ENCODE measurements at regions of chr14 and their contacts with region 1.

Region 1: DNA sequence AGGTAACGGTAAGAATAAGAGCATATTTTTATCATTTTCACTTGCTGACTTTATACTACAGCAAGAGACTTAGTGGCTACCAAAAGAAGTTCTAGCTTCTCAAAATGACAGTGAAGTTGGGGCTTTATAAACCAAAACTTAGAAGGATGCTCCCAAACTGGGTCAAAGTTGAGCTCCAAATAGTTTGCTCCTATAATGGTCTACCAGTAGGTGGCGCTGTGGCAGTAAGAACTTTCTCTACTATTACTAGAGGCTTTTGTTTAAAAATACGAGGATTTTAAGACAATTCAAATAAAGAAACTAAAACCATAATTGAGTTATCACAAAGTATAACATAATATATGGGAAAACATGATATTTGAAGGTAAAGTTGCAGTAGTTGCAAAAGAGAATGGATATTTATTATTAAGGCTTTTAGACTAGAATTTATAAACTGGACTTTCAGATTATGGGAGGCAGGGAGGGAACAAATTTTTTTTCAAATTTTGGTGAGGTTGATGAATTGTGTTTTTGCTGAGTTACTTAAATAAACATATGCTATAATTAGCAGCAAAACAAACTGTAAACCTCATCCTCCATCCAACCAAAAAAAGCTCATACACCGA is 75.0 kb downstream of the TGFB3 start:
- DNase-seq: peak; percentile 87
- H3K4me3 Mint-ChIP-seq: no peak overlapping the region
- H3K27ac Mint-ChIP-seq: no peak overlapping the region
- H3K4me1 Mint-ChIP-seq: no peaks in the 10 kb centered on the region
- H3K27me3 Mint-ChIP-seq: no peaks in the 10 kb centered on the region

Region 2: DNA sequence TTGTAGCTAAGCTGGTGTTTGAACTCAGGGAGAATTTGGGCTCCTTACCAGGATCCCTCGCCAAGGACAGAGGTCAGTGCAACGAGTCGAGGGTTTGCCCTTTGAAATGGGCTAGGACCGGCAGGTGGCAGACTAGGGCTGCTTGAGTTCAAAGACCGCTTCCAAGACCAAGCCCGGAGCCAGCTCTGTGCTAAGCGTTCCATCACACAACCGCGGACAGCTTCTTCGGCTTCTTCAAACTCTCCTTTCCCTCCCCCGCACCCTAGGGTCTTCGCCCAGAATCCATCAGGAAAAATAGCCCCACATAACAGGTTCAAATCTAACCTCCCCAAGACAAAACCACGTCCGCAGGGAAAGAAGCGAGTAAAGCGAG is 329.1 kb before region 1 on chr14:
- CTCF ChIA-PET with region 1: interaction called, 3 read pairs
- intact Hi-C with region 1: loop called (anchors 10 kb)
- DNase-seq: peak; percentile 88
- H3K4me3 Mint-ChIP-seq: peak overlapping the region; percentile 82
- H3K27ac Mint-ChIP-seq: peak overlapping the region; percentile 78
- H3K4me1 Mint-ChIP-seq: peaks cover 22% of the 10 kb centered on the region
- H3K27me3 Mint-ChIP-seq: no peaks in the 10 kb centered on the region

Region 3: GRCh38 chr14:75709207-75709812 is 197.5 kb before region 1 on chr14:
- CTCF ChIA-PET with region 1: interaction called, 6 read pairs
- intact Hi-C with region 1: loop called (anchors 2 kb)
- DNase-seq: peak; percentile 80
- H3K4me3 Mint-ChIP-seq: no peak overlapping the region
- H3K27ac Mint-ChIP-seq: no peak overlapping the region
- H3K4me1 Mint-ChIP-seq: no peaks in the 10 kb centered on the region
- H3K27me3 Mint-ChIP-seq: no peaks in the 10 kb centered on the region

Region 4: DNA sequence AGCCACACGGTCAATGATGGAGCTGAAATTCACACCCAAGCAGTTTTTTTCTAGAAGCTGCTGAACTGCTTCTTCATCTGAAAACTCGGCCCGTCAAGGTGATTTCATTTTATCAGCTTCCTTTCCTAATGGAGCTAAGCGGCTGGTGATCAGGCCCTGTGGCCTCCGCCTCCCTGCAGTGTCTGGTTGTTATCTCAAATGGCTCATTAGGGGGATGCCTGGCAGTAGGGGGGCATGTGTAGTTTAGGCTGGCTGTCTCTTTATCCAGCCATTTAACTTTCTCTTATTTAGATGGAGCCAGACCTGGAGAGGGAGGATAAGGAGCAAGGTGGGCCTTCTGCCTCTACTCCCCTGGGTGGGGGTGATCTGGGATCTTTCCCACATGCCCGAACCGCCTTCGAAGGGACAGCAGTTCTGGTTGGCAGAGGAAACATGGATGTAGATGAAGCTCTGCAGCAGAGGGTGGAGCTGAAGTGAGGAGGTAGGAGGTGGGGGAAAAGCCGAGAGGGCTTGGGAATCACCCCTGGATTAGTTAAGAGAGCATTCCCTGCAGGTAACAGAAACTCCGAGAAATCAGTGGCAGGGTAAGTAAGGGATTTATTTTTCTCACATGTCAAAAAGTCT is 10.7 kb after region 1 on chr14:
- CTCF ChIA-PET with region 1: interaction called, 27 read pairs
- intact Hi-C with region 1: no loop called
- DNase-seq: no peak
- H3K4me3 Mint-ChIP-seq: no peak overlapping the region
- H3K27ac Mint-ChIP-seq: no peak overlapping the region
- H3K4me1 Mint-ChIP-seq: no peaks in the 10 kb centered on the region
- H3K27me3 Mint-ChIP-seq: no peaks in the 10 kb centered on the region

Region 5: GRCh38 chr14:75960231-75960630 is 53.5 kb after region 1 on chr14:
- CTCF ChIA-PET with region 1: no interaction called
- intact Hi-C with region 1: no loop called
- DNase-seq: no peak
- H3K4me3 Mint-ChIP-seq: no peak overlapping the region
- H3K27ac Mint-ChIP-seq: no peak overlapping the region
- H3K4me1 Mint-ChIP-seq: no peaks in the 10 kb centered on the region
- H3K27me3 Mint-ChIP-seq: no peaks in the 10 kb centered on the region

Region 6: DNA sequence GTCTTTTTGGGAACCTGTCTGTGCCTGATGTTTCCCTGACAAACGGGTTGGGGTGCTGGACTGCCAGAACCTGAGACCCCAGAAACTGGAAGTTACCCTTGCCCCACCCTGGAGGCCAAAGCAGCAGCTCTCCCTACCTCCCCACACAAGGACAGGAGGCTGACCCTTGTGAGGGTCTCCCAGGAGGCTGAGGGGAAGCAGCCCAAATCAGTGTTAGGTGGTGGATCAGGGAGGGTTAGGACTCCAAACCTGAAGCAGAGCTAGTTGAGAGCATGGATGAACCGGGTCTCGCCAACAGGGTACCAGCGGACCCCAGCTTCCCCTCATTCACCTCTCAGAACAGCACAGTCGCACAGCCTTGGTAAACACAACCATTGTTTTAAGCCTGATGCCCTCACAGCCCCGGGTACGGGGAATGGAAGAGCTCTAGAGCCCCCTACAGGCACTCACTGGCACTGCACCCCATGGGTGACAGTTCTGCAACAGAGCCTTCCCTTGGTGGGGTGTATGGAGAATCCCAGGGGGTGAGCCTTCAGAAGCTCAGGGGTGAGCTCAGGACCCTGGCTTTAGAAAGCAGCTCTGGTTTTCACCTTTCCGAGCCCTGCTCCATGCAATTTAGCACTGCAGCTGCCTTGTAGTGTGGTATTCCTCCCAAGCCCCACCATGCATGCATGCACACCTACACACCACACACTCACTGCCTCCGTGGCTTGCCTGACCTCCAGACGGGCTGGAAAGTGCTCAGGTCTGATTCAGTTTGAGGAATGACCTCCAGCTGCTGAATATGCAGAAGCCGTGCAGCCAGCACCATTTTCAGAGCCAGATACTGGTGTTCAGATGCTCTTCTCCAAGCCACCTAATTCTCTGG is 480.4 kb after region 1 on chr14:
- CTCF ChIA-PET with region 1: no interaction called
- intact Hi-C with region 1: loop called (anchors 1 kb)
- DNase-seq: peak; percentile 77
- H3K4me3 Mint-ChIP-seq: no peak overlapping the region
- H3K27ac Mint-ChIP-seq: no peak overlapping the region
- H3K4me1 Mint-ChIP-seq: no peaks in the 10 kb centered on the region
- H3K27me3 Mint-ChIP-seq: peaks cover 28% of the 10 kb centered on the region